Lower leg skin (tissue), 4 donors: ENCODE measurements at regions of chr13 and their contacts with region 1.

Region 1: GRCh38 chr13:91056746-91057145 is 290.7 kb upstream of the MIR17HG start:
- DNase-seq: no peak
- H3K4me3 ChIP-seq: no peak overlapping the region
- CTCF ChIP-seq: no peak
- POLR2A ChIP-seq: no peak

Region 2: GRCh38 chr13:90968166-90968904 is 88.4 kb before region 1 on chr13:
- intact Hi-C with region 1: loop called (anchors 2 kb)
- DNase-seq: no peak
- H3K4me3 ChIP-seq: no peak overlapping the region
- CTCF ChIP-seq: no peak
- POLR2A ChIP-seq: no peak